BJ (cell line): ENCODE measurements at regions of chr7 and their contacts with region 1.

Region 1: GRCh38 chr7:141763797-141764196 is at the start of gene TAS2R3:
- DNase-seq: no peak
- H3K4me3 ChIP-seq: no peak within 1 kb of the TSS
- H3K27me3 ChIP-seq: no peaks in the 10 kb centered on the region
- CTCF ChIP-seq: no peak
- polyA plus RNA-seq, gene TAS2R3: 0.29 TPM in 1 of 2 replicates, not detected in the other

Region 2: DNA sequence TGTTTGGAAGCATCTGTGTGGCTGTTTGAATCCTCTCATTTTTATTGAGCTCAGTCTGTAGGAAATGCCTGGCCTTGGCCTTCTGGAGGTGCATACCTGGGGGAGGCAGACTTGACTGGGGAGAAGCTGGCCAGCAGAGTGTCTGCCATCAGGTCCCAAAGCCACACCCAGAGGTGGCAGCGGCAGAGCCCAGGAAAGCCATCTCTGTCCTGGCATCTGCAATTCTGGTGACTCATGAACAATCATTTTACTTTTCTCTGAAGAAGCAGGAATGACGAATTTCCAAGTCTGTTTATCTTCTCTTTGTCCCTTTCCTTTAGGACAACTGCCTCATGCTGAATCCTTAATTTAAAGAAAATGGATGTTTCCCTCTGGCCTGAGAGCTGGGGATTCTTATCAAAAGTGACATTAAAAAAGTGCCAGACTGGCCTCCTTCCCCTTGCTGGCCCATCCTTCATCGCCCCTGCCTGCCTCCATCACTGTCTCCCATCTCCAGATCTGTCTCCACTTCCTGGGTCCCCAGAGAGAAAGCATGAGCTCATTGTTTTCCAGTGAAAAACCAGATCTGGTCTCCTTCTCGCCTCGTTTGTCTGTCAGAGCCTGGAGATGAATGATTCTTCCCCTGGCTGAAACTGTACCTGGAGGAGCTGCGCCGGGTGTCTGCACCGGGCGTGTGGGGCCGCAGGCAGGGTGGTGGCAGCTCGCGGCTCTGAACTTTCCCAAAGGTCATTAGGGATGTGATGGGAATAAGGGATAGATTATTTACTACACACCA is 565.4 kb before region 1 on chr7:
- CTCF ChIA-PET with region 1: no interaction called
- POLR2A ChIA-PET with region 1: interaction called, 14 read pairs
- DNase-seq: no peak
- H3K4me3 ChIP-seq: no peak overlapping the region
- H3K27me3 ChIP-seq: no peaks in the 10 kb centered on the region
- CTCF ChIP-seq: no peak

Region 3: GRCh38 chr7:141737834-141738591 is 25.8 kb before region 1 on chr7 and contains the start of gene SSBP1:
- CTCF ChIA-PET with region 1: interaction called, 14 read pairs
- POLR2A ChIA-PET with region 1: no interaction called
- DNase-seq: peak; percentile 82
- H3K4me3 ChIP-seq: peak within 1 kb of the TSS; percentile 88
- H3K27me3 ChIP-seq: no peaks in the 10 kb centered on the region
- CTCF ChIP-seq: peak; percentile 84
- polyA plus RNA-seq, gene SSBP1: 55.0 and 139 TPM in 2 replicates